IMR-90 (cell line): ENCODE measurements at regions of chr3 and their contacts with region 1.

Region 1: DNA sequence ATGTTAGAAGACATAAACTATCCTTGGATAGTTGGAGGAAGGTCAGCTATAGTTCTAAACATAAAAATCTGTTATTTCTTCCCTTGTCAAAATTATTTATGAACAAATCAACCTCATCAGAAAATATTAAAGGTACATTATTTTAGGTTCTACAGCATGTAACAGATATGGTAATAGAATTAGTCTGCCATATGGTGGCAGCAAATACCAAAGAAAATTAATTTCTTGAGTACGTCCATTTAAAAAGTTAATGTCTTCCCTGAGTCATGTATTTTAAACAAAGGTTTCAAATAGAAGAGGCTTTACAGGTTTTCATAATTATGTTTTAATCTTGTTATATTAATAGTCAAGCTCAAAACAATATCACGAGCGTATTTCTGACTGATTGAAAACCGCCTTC is 17.9 kb upstream of the ANKRD28 start:
- DNase-seq: peak; percentile 88
- ATAC-seq: peak; percentile 79
- H3K4me3 ChIP-seq: no peak overlapping the region
- H3K27ac ChIP-seq: peak overlapping the region; percentile 61; the same call in 1 of the 2 replicates
- H3K4me1 ChIP-seq: peaks cover 3% of the 10 kb centered on the region; the same call in 1 of the 2 replicates
- H3K27me3 ChIP-seq: no peaks in the 10 kb centered on the region
- CTCF ChIP-seq: peak; percentile 67
- POLR2A ChIP-seq: no peak
- RAD21 ChIP-seq: peak; percentile 75

Region 2: GRCh38 chr3:15427182-15427880 is 388.4 kb before region 1 on chr3 and contains the starts of genes EAF1 and METTL6:
- CTCF ChIA-PET with region 1: no interaction called
- POLR2A ChIA-PET with region 1: no interaction called
- dilution Hi-C with region 1: no loop called
- in situ Hi-C with region 1: no loop called
- intact Hi-C with region 1: loop called (anchors 5 kb)
- DNase-seq: peak; percentile 74
- ATAC-seq: peak; percentile 86
- H3K4me3 ChIP-seq: peak within 1 kb of the TSS; percentile 92
- H3K27ac ChIP-seq: peak within 1 kb of the TSS; percentile 93
- H3K4me1 ChIP-seq: peaks cover 1% of the 10 kb centered on the region; the same call in 1 of the 2 replicates
- H3K27me3 ChIP-seq: no peaks in the 10 kb centered on the region
- CTCF ChIP-seq: 0 out of 2 replicates have a peak, but pooled peaks have one; percentile 0
- POLR2A ChIP-seq: peak; percentile 75
- RAD21 ChIP-seq: no peak
- total RNA-seq, gene EAF1: 19.7 and 21.3 TPM in 2 replicates
- total RNA-seq, gene METTL6: 21.5 and 32.5 TPM in 2 replicates

Region 3: DNA sequence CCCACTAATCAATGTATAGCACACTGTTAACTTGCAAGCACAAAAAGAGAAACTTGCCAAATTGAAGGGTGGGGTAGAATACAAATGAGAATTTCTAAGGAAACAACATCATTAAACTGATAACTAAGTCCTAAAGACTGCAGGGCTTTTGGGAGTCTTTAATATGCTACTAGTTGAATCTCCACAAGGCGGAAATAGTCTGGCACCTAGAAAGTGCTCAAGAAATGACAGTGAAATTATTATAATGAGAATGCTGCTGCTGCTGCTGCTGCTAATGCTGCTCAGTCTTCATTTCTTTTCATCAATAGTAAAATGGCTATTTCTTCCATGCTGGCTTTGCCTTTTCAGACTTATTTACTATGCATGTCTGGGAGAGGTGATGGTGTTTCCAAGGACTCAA is 122.3 kb before region 1 on chr3:
- CTCF ChIA-PET with region 1: no interaction called
- POLR2A ChIA-PET with region 1: no interaction called
- dilution Hi-C with region 1: no loop called
- in situ Hi-C with region 1: no loop called
- intact Hi-C with region 1: loop called (anchors 2 kb)
- DNase-seq: peak; percentile 19
- ATAC-seq: peak; percentile 29; the same call in 1 of the 2 replicates
- H3K4me3 ChIP-seq: no peak overlapping the region
- H3K27ac ChIP-seq: no peak overlapping the region
- H3K4me1 ChIP-seq: no peaks in the 10 kb centered on the region
- H3K27me3 ChIP-seq: no peaks in the 10 kb centered on the region
- CTCF ChIP-seq: peak; percentile 29; the same call in 1 of the 2 replicates
- POLR2A ChIP-seq: no peak
- RAD21 ChIP-seq: peak; percentile 27; the same call in 1 of the 2 replicates

Region 4: GRCh38 chr3:15982667-15983145 is 167.0 kb after region 1 on chr3:
- CTCF ChIA-PET with region 1: no interaction called
- POLR2A ChIA-PET with region 1: interaction called, 3 read pairs
- dilution Hi-C with region 1: no loop called
- in situ Hi-C with region 1: no loop called
- intact Hi-C with region 1: loop called (anchors 2 kb)
- DNase-seq: peak; percentile 96
- ATAC-seq: peak; percentile 92
- H3K4me3 ChIP-seq: peak overlapping the region; percentile 7; the same call in 1 of the 2 replicates
- H3K27ac ChIP-seq: peak overlapping the region; percentile 94
- H3K4me1 ChIP-seq: peaks cover 7% of the 10 kb centered on the region
- H3K27me3 ChIP-seq: no peaks in the 10 kb centered on the region
- CTCF ChIP-seq: no peak
- POLR2A ChIP-seq: no peak
- RAD21 ChIP-seq: no peak; the same call in 1 of the 2 replicates

Region 5: DNA sequence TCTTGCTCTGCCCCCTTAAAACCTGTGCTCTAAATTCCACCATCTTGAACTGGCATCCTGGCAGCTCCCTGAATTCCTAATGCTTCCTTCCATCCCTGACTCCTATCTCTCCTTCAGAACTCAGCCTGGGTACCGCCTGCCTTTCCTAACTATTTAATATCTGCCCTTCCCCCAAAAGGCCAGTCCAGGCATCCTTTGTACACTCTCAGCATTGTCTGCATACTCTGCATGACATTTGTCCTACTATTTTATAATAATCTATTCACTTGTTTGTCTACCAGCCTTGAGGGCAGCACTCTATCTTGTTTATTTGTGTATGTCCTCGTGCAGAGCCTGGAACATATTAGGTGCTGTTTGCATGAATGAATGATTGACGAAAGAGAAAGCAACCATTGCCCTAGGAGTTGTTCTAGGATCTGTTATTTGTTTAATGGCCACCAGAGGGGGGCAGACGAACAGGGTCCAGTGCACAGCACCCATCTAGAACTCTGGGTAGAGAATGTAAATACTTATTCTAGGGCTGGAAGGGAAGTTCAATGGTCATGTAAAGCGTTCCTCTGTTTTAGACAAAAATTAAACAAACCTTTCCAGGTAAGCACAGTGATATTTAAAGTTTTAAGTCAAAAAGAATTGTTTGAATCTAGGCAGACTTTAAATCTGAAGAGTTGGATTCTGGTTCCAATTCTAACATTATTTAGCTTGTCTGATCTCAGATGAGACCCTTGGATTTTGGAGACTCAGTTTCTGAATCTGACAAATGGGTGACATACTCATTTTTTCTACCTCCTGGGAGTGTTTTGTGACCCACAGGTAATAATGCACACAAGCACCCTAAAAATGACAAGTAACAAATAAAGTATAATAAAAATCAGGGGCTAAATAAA is 233.0 kb after region 1 on chr3:
- CTCF ChIA-PET with region 1: no interaction called
- POLR2A ChIA-PET with region 1: no interaction called
- dilution Hi-C with region 1: no loop called
- in situ Hi-C with region 1: loop called (anchors 5 kb)
- intact Hi-C with region 1: loop called (anchors 1 kb)
- DNase-seq: peak; percentile 81
- ATAC-seq: peak; percentile 94
- H3K4me3 ChIP-seq: no peak overlapping the region; the same call in 1 of the 2 replicates
- H3K27ac ChIP-seq: peak overlapping the region; percentile 28; the same call in 1 of the 2 replicates
- H3K4me1 ChIP-seq: peaks cover 12% of the 10 kb centered on the region
- H3K27me3 ChIP-seq: no peaks in the 10 kb centered on the region
- CTCF ChIP-seq: peak; percentile 93
- POLR2A ChIP-seq: peak; percentile 67
- RAD21 ChIP-seq: peak; percentile 100

Region 6: DNA sequence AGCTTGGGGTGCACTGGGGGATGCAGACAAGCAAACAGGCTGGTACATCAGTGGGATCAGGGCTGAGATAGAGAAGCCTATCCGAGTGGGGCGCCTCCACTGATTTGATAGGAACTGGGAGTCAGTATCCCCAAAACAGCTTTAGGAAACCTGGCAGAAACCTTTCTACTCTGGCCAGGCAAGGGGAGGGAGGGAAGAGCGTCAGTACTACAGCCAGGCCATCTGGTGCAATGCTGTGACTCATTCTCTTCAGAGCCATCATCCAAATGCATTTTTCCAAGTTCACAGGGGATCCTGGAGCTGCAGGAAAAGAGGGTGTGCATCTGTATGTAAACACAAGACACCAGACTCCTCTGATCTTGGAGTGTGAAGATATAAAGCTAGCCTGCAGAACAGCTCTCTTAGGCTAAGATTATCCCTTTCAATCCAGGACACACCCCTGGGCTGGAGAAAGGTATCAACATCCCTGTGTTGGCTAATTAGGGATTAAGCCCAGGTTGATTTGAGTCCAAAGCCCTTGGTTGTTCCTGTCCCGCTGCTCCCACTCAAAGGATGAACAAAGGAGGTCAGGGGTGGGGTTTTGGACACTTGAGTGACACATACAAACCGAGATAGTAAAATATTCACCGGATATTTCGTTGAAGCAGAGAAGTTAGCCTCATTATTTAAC is 368.0 kb after region 1 on chr3:
- CTCF ChIA-PET with region 1: interaction called, 5 read pairs
- POLR2A ChIA-PET with region 1: no interaction called
- dilution Hi-C with region 1: no loop called
- in situ Hi-C with region 1: loop called (anchors 10 kb)
- intact Hi-C with region 1: loop called (anchors 1 kb)
- DNase-seq: peak; percentile 98
- ATAC-seq: peak; percentile 90
- H3K4me3 ChIP-seq: no peak overlapping the region
- H3K27ac ChIP-seq: peak overlapping the region; percentile 60; the same call in 1 of the 2 replicates
- H3K4me1 ChIP-seq: peaks cover 35% of the 10 kb centered on the region
- H3K27me3 ChIP-seq: no peaks in the 10 kb centered on the region
- CTCF ChIP-seq: no peak
- POLR2A ChIP-seq: no peak
- RAD21 ChIP-seq: peak; percentile 25

Region 7: GRCh38 chr3:16247276-16248061 is 431.8 kb after region 1 on chr3:
- CTCF ChIA-PET with region 1: interaction called, 4 read pairs
- POLR2A ChIA-PET with region 1: no interaction called
- dilution Hi-C with region 1: no loop called
- in situ Hi-C with region 1: loop called (anchors 5 kb)
- intact Hi-C with region 1: loop called (anchors 1 kb)
- DNase-seq: peak; percentile 84
- ATAC-seq: peak; percentile 88
- H3K4me3 ChIP-seq: no peak overlapping the region
- H3K27ac ChIP-seq: no peak overlapping the region
- H3K4me1 ChIP-seq: peaks cover 13% of the 10 kb centered on the region
- H3K27me3 ChIP-seq: no peaks in the 10 kb centered on the region
- CTCF ChIP-seq: peak; percentile 96
- POLR2A ChIP-seq: peak; percentile 50
- RAD21 ChIP-seq: peak; percentile 99